Spleen (tissue), 13 donors: ENCODE measurements at regions of chr11 and their contacts with region 1.

Region 1: DNA sequence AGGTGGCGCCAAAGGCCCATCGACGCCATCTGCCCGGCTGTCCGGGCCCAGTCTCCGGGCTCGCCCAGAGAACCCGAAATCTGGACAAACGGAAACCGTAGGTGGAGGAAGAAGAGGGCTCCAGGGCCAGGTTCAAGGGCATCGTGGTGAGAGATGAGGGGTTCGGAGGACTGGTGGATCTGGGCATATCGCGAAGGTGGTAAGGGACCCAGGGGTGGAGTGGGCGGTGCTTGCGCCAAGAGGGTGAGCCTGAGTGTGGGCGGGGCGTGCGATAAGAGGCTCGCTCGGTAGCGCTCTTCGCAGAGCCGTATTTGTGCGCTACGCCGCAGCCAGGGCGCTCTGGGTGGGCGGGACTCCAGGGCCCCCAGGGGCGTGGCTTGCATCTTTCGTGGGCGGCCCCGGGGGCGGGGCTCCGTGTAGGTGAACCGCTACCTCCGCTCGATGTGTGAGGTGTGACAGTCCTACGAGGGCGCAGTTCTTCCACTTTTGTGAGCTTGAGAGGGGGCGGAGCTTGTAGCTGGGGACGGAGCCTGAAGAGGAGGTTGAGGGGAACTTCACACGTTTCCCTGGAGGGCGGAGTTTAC is 4.8 kb downstream of the CD248 start:
- DNase-seq: peak; percentile 98
- H3K4me3 ChIP-seq: peak overlapping the region; percentile 38 to 77 (median 55)
- H3K27ac ChIP-seq: peak overlapping the region; percentile 83 to 93 (median 90)
- H3K4me1 ChIP-seq: peaks cover 5 to 59% (median 31%) of the 10 kb centered on the region in 6 donors
- H3K27me3 ChIP-seq: peaks cover 0 to 17% (median 0%) of the 10 kb centered on the region in 7 donors
- CTCF ChIP-seq: peak in 8 of 11 experiments; percentile 49 to 96 (median 93)
- POLR2A ChIP-seq: no peak

Region 2: GRCh38 chr11:66328307-66329144 is 16.5 kb after region 1 on chr11:
- intact Hi-C with region 1: loop called (anchors 2 kb)
- DNase-seq: peak; percentile 93
- H3K4me3 ChIP-seq: peak overlapping the region in 1 of 8 donors; percentile 31
- H3K27ac ChIP-seq: peak overlapping the region in 6 of 8 donors; percentile 32 to 71 (median 54)
- H3K4me1 ChIP-seq: peaks cover 16 to 59% (median 41%) of the 10 kb centered on the region in 6 donors
- H3K27me3 ChIP-seq: no peaks in the 10 kb centered on the region
- CTCF ChIP-seq: peak; percentile 97 to 99 (median 98)
- POLR2A ChIP-seq: no peak

Region 3: DNA sequence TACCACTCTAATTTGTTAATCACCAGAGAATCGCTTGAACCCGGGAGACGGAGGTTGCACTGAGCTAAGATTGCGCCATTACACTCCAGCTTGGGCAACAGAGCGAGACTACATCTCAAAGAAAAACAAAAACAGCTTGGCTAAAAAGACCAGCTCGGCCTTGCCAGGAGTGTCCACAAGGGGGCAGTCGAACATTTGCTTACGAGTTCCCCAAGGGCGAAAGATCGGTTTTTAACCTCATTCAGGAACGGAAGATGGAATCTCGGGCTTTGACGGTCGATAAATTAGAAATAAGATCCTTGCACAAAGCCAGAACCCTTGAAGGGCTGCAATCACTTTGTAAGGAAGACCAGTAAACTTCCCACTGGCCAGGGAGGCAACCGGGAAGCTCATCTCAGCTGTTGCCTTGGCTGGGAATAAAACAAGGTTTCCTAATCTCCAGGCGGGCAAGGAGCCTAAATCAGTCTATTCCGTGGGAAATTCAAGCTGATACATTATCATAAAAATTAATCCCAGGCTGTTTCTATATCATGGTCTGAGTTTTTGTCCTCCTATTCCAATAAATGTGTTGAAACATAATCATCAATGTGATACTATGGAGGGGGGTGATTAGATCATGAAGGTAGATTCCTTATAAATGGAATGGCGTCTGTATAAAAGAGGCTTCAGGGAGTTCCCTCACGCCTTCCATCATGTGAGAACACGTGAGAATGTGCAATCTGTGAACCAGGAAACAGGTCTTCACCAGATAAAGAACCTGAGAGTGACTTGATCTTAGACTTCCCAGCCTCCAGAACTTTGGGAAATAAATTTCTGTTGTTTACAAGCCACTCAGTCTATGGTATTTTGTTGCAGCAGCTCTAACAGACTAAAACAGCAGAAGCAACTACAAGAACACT is 74.4 kb after region 1 on chr11:
- intact Hi-C with region 1: loop called (anchors 5 kb)
- DNase-seq: peak; percentile 91
- H3K4me3 ChIP-seq: peak overlapping the region in 1 of 8 donors; percentile 46
- H3K27ac ChIP-seq: no peak overlapping the region
- H3K4me1 ChIP-seq: peaks cover 0 to 16% (median 8%) of the 10 kb centered on the region in 6 donors
- H3K27me3 ChIP-seq: peaks cover 0 to 28% (median 0%) of the 10 kb centered on the region in 7 donors
- CTCF ChIP-seq: peak; percentile 58 to 92 (median 88)
- POLR2A ChIP-seq: no peak